RWPE1 (cell line): ENCODE measurements at regions of chr6 and their contacts with region 1.

Region 1: DNA sequence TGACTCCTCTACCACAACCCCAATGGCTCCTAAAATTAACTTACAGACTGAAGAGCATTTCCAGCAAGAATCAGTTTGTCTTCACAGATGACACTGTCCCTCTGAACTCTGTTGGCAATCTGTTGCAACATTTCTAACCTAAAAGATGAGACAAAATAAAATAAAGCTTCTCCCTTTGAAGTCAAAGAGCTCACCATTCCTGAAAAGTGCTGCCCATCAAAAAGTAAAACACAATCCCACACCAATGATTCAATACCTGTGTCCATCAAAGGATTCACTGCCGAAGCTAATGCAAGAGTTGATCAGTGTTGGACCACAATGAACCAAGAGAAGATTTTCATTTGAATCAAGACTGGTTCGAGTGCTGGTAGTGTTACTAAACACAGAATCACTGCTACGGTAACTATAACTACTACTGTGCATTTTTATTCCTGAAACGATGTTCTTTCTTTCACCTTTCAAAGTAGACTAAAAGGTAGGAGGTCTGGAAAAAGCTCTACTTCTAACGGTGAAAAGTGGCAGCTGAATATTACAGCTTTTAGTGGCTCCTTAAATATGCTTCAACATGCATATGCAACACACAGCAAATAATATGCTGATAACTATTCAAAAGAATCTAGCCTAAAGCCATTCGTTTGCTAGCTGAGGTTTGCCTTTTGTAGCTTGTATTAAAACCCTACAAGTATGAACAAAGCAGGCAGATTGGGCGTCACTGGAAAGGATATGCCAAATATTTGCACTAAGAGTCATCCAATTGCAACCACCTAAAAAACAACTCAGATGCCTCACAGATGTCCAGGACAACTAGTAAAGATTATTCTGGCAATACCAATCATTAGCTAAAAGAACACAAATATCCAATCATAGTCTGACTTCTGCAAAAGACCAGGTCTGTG is at the start of gene DST:
- DNase-seq: peak; percentile 85
- H3K27ac ChIP-seq: peak within 1 kb of the TSS; percentile 22
- CTCF ChIP-seq: no peak

Region 2: GRCh38 chr6:56699066-56699654 is 56.5 kb after region 1 on chr6:
- CTCF ChIA-PET with region 1: interaction called, 12 read pairs
- POLR2A ChIA-PET with region 1: no interaction called
- DNase-seq: peak; percentile 27
- H3K27ac ChIP-seq: no peak overlapping the region
- CTCF ChIP-seq: peak; percentile 73